ENCODE measurements at regions of chr9 and their contacts with region 1.

Region 1: DNA sequence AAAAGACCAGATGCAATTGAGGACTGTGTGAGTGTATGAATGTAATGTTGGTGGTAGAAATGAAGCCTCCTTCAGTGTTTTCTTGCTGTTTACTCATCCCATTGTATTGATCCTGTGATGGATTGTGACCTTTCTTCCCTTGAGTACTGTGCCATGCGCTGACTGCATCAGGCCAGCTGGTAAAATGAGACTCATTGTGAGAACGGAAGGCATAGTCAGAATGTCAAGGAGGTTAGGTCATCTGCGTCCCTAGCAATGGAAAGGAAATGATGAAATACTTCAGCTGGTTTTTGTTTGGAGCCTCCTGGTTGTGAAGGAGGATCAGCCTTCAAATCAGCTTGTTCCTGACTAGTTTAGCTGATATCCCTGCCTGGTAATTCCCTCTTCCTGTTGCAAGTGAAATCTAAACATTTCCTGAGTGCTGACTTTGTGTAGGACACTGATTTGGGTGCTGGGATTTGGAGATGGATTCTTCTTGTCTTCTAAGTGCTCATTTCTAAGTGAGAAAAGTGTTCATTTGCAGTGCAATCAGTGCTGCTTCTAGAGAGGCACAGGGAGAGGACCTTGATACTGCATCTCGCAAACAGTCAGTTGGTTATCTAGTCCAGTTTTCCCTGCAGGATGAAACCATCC is 35.5 kb downstream of the TNFSF8 start:
- DNase-seq: peak; percentile 74 to 92 (median 85)
- H3K4me3 ChIP-seq: peak overlapping the region in 1 of 3 experiments; percentile 21
- H3K4me3 Mint-ChIP-seq: peak overlapping the region in 1 of 2 donors; percentile 39
- H3K27ac ChIP-seq: peak overlapping the region in 1 of 2 donors; percentile 84
- H3K27ac Mint-ChIP-seq: peak overlapping the region; percentile 84 to 97 (median 92)
- H3K4me1 ChIP-seq: peaks cover 68 to 70% of the 10 kb centered on the region in 2 donors
- H3K4me1 Mint-ChIP-seq: peaks cover 42% of the 10 kb centered on the region
- H3K27me3 ChIP-seq: no peaks in the 10 kb centered on the region
- H3K27me3 Mint-ChIP-seq: peaks cover 0 to 1% (median 0%) of the 10 kb centered on the region in 3 donors
- CTCF ChIP-seq: no peak

Region 2: DNA sequence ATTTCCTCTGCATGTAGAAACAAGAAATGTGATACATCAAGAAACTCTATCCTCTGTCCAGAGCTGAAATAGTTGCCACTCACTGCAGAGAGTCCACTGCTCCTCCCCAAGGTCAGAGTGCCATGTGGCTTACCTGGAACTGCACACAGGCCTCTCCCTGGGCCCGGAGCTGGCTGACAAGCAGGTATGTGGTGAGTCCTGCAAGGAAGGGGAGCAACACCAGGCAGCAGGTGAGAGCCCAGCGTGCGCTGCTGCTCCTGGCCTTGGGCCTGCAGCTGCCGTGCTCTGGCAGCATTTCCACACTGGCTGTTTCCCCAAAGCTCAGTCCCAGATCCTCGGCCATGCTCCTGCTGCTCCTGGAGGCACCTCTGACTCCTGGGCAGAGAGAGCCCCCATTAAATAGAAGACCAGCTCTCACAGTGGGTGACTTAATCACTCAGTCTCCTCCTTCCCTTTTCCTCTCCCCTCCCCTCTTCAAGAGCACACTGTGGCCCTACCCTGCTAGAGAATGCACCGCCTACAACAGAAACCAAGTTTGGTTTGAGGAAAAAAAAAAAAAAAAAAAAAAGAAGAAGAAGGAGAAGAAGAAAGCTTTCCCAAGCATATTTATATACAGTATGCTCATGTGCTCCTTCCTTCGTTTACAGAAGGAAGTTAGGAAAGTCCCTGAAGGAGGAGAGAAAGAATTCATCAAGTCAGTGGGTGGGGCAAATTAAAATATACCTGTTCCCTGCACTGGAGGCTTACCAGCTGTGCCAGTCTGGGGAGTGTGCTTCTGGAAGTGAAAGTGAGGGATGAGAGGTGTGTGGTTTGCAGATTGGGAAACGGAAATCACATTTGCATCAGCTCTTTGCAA is 89.0 kb before region 1 on chr9 and contains the start of gene TNFSF15:
- intact Hi-C with region 1: loop called in 1 of 2 experiments (anchors 10 kb)
- DNase-seq: peak; percentile 51 to 74 (median 58)
- H3K4me3 ChIP-seq: peak within 1 kb of the TSS; percentile 31 to 69 (median 32)
- H3K4me3 Mint-ChIP-seq: peak within 1 kb of the TSS; percentile 76 to 89
- H3K27ac ChIP-seq: peak within 1 kb of the TSS; percentile 64 to 83
- H3K27ac Mint-ChIP-seq: peak within 1 kb of the TSS; percentile 82 to 96 (median 92)
- H3K4me1 ChIP-seq: peaks cover 17 to 44% of the 10 kb centered on the region in 2 donors
- H3K4me1 Mint-ChIP-seq: peaks cover 44% of the 10 kb centered on the region
- H3K27me3 ChIP-seq: no peaks in the 10 kb centered on the region
- H3K27me3 Mint-ChIP-seq: peaks cover 2 to 3% (median 3%) of the 10 kb centered on the region in 3 donors
- CTCF ChIP-seq: no peak
- polyA plus RNA-seq, gene TNFSF15: 0.07 to 1.1 (median 0.11) TPM